ENCODE measurements at regions of chr17 and their contacts with region 1.

Region 1: DNA sequence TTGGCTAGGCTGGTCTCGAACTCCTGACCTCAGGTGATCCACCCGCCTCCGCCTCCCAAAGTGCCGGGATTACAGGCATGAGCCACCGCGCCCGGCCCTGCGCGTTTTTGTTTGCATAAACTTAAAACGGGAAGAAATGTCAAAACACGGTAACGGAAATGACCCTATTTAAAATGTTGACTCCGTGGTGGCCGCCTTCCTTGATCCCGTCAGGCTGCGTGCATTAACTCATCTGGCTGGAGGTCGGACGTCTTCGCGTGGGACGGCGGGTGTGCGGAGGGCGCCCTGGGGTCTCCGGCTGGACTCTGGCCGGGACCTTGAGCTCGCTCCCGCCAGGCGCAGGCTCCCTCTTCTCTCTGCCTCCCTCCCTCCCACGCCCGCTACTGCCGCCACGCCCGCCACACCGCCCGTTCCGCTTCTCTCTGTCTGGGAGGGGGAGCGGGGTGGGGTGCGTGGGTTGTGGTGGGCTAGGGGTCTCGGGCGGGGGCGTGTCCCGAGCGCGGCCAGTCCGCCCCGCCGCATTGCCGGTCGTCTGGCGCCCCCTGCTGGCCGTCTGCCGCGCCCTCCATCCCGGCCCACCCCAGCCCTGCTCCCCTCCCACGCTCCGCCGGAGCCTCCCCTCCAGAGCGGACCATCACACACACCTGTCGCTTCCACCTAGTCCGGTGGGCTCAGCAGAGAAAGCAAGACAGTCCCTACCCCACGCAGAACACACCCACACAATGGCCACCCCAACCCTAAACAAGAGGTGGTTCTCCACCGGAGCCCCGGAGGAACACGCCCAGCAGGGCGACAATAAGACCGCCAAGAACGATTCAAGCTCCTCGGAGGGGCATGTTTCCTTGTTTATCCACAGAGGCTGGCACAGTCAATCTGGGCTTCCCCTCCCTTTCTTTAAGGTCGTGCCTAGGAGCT is 1.2 kb upstream of the CCDC42 start:
- DNase-seq: no peak
- H3K4me3 ChIP-seq: peak overlapping the region; percentile 40 to 80 (median 60)
- H3K27ac ChIP-seq: peak overlapping the region; percentile 15 to 51 (median 38)
- H3K4me1 ChIP-seq: peaks cover 9 to 17% (median 12%) of the 10 kb centered on the region in 3 donors
- H3K27me3 ChIP-seq: no peaks in the 10 kb centered on the region
- CTCF ChIP-seq: peak; percentile 70 to 99 (median 78)
- POLR2A ChIP-seq: peak in 1 of 4 donors; percentile 7

Region 2: GRCh38 chr17:8393420-8394241 is 352.2 kb before region 1 on chr17:
- intact Hi-C with region 1: loop called (anchors 10 kb)
- DNase-seq: no peak
- H3K4me3 ChIP-seq: peak overlapping the region in 1 of 4 donors; percentile 21
- H3K27ac ChIP-seq: peak overlapping the region; percentile 44 to 79 (median 66)
- H3K4me1 ChIP-seq: peaks cover 0 to 46% (median under 1%) of the 10 kb centered on the region in 3 donors
- H3K27me3 ChIP-seq: peaks cover 0 to 60% (median 0%) of the 10 kb centered on the region in 4 donors
- CTCF ChIP-seq: no peak
- POLR2A ChIP-seq: no peak

Measured in esophagus squamous epithelium (tissue), 5 donors.